ENCODE measurements at regions of chr11 and their contacts with region 1.

Region 1: GRCh38 chr11:15941201-15941770 is 415.1 kb downstream of the SOX6 start:
- DNase-seq: peak; percentile 21 to 56 (median 40)
- H3K4me3 ChIP-seq: peak overlapping the region in 1 of 4 donors; percentile 7
- H3K27ac ChIP-seq: no peak overlapping the region
- H3K4me1 ChIP-seq: no peaks in the 10 kb centered on the region
- H3K27me3 ChIP-seq: no peaks in the 10 kb centered on the region
- CTCF ChIP-seq: peak; percentile 60 to 95 (median 78)
- POLR2A ChIP-seq: no peak

Region 2: DNA sequence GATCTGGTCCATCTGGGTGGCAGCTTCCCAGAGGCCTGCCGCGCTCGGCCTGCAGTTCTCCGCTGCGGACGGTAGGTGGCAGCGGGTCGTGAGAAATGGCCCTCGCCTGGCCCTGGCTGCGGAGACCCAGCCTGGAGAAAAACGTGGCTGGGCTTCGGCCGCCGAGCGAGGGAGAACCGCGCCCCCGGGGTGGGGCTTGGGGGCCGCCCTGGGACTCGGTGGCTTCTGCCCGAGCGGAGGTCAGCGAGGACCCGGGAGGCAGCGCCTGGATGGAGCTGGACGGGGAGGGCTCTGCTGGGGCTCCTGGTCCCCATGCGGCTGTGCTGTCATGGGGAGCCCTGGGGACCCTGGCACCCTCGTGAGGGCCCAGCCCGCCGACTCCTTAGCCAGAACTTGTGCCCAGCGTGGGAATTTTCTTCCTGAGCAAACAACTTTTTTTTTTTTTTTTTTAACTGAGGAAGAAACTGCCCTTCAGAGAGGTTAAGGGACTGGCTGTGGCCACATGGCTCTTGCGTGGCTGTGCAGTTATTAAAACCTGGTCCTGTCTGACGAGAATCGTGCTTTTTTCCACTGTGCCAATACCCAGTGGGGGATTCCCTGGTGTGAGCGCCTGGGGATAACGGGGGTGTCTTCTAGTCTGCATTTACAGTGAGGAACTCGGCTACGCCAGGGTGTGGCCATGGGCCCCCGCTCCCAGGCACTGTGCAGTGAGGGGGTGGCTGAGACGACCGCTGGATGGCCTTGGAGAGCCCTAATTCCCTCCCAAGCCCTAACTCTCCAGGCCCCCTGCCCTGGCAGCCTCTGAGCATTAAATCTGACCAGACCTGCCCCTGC is 291.0 kb before region 1 on chr11:
- intact Hi-C with region 1: loop called in 1 of 2 experiments (anchors 10 kb)
- DNase-seq: peak; percentile 93 to 96 (median 94)
- H3K4me3 ChIP-seq: peak overlapping the region in 2 of 4 donors; percentile 41 to 55
- H3K27ac ChIP-seq: peak overlapping the region in 3 of 5 donors; percentile 34 to 72 (median 38)
- H3K4me1 ChIP-seq: peaks cover 4 to 20% of the 10 kb centered on the region in 2 donors
- H3K27me3 ChIP-seq: no peaks in the 10 kb centered on the region
- CTCF ChIP-seq: peak; percentile 94 to 99 (median 98)
- POLR2A ChIP-seq: no peak

Region 3: DNA sequence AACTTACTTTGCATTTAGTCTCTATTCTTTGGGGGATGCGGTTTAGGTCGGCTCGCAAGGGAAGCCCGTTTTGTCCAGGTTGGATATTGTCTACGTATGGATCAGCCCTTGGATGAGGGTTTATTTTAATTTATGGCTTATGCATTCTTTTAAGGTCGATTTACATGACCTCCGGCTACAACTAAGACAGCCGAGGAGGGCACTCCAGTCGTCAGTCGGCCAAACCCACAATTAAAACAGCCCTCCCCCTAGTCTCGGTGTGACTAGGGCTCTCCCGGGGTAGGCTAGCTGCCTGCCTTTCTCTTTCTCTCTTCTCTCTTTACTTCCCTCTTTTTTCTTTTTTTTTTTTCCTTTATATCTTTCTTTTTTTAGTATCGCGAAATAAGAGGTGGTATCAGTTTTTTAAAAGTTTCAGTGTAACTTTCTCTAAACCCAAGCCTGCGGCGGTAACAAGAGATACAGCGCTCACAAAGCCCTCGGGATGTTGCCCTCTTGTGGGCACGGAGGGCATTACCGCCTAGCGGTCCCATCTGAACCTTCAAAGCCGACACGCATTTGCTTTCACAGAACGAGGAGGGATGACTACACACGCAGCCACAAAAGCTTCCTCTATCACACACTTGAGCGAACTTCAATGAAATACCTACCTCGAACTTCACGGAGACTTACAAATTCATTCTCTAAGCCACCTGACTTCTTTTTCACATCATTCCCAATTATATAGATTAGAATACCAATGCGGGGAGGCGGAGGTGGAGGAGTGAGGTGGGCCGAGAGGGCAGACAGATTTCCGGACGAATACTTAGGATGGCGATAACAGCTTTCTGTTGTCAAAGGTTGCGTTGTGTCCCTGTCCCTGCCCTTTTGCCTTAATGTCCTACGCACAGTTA is 664.9 kb after region 1 on chr11:
- intact Hi-C with region 1: loop called (anchors 5 kb)
- DNase-seq: peak; percentile 88 to 97 (median 93)
- H3K4me3 ChIP-seq: peak overlapping the region; percentile 9 to 60 (median 34)
- H3K27ac ChIP-seq: peak overlapping the region in 4 of 5 donors; percentile 76 to 93 (median 84)
- H3K4me1 ChIP-seq: peaks cover 5 to 14% of the 10 kb centered on the region in 2 donors
- H3K27me3 ChIP-seq: peaks cover 23% of the 10 kb centered on the region
- CTCF ChIP-seq: peak; percentile 92 to 98 (median 97)
- POLR2A ChIP-seq: peak; percentile 61 to 89

Region 4: DNA sequence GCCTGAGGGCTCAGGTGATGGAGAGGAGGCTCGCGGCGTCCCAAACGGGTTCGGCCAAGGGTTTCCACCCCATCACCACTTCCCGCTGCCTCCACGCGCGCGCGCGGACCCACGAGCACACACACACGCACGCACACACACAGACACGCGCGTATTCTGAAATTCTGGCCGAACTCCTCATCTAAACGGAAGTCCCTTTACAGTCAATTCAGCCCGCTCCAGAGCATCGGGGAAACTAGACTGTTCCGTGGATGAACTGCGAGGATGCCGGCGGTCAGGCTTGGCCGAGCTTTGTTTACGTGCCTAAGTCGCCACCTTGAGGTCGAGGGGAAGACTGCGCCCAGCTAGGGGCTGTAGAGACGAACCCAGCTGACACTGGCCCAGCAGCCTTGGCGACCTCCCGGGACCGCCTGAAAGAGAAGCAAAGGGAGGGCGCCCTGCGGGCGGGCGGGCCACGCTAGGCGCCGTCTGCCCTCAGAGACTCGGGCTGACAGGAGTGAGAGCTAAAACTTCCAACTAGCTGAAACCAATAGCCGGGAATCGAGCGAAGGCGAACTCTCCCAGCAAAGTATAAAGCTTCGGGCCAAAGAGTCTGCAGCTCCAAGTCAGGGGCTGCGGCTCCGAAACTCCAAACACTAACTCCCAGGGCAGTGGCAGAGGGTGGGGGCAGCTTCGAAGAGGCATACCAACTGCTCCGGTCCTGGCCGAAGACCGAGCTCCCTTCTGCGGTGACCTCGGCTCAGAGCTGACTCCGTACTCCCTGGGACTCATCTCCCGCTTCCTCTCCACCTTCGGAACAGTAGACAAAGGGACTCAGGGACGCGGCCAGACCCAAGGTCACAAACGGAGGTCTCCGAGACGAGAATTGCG is 672.5 kb after region 1 on chr11:
- intact Hi-C with region 1: loop called (anchors 5 kb)
- DNase-seq: peak; percentile 86 to 94 (median 91)
- H3K4me3 ChIP-seq: peak overlapping the region in 2 of 4 donors; percentile 31 to 56
- H3K27ac ChIP-seq: peak overlapping the region in 3 of 5 donors; percentile 40 to 80 (median 59)
- H3K4me1 ChIP-seq: peaks cover 4 to 8% of the 10 kb centered on the region in 2 donors
- H3K27me3 ChIP-seq: peaks cover 18% of the 10 kb centered on the region
- CTCF ChIP-seq: peak; percentile 79 to 93 (median 87)
- POLR2A ChIP-seq: peak in 1 of 2 donors; percentile 30

Measured in adrenal gland (tissue), 19 donors.